Activated CD8-positive, alpha-beta T cell treated with anti-CD3 and anti-CD28 coated beads, Interleukin-2, amount 10 ng/mL, durations not matched to agents 7 days and 5 days (primary cell): ENCODE measurements at regions of chr19 and their contacts with region 1.

Region 1: DNA sequence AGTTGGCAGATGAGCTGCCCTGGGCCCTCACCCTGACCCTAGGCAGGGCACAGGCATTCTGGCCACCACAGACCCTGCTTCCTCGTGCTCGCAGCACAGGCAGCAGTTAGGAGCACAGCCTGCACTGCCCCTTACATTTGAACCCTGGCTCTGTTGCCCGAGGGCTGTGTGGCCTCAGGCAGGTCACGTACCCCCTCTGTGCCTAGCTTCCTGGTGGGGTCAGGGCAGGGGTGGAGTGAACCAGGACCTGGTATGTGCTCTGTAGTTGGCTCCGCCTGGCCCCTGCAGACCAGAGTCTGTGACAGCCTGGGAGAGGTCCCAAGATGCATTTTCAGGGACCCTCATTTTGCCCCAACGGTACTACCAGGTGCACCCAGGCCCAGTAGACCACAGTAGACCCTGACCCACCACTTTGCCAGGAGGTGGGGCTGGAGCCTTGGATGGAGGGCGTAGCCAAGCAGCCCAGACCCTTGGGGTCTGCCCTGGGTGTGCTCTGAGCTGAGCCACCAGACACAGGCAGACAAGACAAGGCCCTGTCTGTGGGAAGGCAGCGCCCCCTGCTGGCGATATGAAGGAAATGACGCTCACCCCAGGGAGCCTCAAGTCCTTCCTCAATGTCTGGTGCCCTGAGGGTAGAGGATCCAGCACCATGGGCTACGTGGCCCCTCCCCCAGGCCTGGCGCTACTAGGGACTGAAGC is 9.1 kb downstream of the LYL1 start:
- DNase-seq: peak; percentile 88
- ATAC-seq: peak; percentile 79
- H3K4me3 Mint-ChIP-seq: no peak overlapping the region
- H3K27ac Mint-ChIP-seq: no peak overlapping the region
- H3K4me1 Mint-ChIP-seq: peaks cover 26% of the 10 kb centered on the region
- H3K27me3 Mint-ChIP-seq: peaks cover 32% of the 10 kb centered on the region

Region 2: GRCh38 chr19:12974301-12975220 is 119.0 kb before region 1 on chr19:
- CTCF ChIA-PET with region 1: interaction called, 131 read pairs
- POLR2A ChIA-PET with region 1: interaction called, 3 read pairs
- DNase-seq: no peak
- ATAC-seq: no peak
- H3K4me3 Mint-ChIP-seq: no peak overlapping the region
- H3K27ac Mint-ChIP-seq: no peak overlapping the region
- H3K4me1 Mint-ChIP-seq: no peaks in the 10 kb centered on the region
- H3K27me3 Mint-ChIP-seq: peaks cover 8% of the 10 kb centered on the region

Region 3: DNA sequence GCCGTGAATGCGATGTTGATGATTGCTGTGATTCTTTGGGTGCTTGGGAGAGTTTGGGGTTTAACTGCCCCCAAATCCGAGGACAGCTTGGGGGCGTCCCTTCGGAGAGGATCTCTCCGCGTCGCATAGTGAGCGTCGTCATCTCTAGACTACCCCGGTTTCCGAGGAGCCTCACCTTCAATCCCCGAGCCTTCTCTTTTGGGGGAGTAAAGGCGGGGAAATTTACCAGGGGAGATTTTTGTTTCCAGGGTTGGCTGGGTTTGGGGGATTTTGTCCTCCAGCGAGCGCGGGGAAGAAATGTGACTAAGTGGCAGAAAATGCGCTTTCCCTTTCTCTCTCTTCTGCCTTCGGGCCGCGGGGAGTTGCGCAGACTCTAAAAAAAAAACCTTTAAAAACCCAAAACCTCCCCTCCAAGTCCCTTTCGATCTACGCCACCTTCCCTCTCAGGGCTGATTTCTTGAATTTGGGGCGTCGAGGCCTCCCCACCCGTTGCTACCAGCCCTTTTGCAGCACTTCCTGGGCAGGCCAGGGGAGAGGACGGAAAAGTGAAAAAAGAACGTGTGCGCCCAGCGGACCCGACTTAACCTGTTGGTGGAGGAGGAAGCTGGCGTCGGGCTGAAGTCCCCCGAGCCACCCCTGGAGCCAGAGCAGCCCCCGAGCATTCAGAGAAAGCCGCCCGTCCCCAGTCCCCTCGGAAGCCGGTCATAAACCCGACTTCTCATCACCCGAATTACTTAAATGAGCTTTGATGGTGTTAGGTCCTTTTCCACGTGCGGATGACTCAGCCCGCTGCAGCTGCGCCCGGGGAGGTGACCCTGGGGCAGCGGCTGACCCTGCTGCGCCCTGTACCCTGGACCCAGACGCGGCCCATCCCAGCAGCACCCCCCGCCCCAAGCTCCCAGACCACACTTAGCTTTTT is 80.6 kb before region 1 on chr19:
- CTCF ChIA-PET with region 1: interaction called, 14 read pairs
- POLR2A ChIA-PET with region 1: no interaction called
- DNase-seq: peak; percentile 49
- ATAC-seq: peak; percentile 35
- H3K4me3 Mint-ChIP-seq: peak overlapping the region; percentile 74
- H3K27ac Mint-ChIP-seq: no peak overlapping the region
- H3K4me1 Mint-ChIP-seq: peaks cover 21% of the 10 kb centered on the region
- H3K27me3 Mint-ChIP-seq: peaks cover 78% of the 10 kb centered on the region